GM18951 (cell line): ENCODE measurements at regions of chr3 and their contacts with region 1.

Region 1: DNA sequence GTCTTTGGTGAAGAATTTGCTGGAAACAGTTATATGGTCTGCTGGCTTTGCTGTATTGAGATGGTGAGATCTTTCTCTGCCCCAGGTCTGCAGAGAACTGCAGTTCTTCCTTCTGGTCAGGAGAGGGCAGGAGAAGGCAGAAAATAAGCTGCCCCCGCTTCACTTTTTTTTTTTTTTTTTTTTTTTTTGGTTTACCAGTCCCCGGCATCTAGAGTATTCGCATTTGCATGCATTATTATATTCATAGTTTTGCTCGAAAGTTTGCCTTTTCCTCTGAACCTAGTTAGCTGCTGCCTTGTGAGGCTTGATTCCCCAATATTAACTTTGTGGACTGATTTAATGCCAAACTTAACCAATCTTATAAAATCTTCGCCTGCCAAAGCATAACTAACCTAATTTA is 10.6 kb upstream of the PARL start:
- POLR2A ChIP-seq: no peak

Region 2: GRCh38 chr3:184017672-184018423 is 122.6 kb after region 1 on chr3 and contains the start of gene ABCC5:
- in situ Hi-C with region 1: loop called (anchors 10 kb)
- POLR2A ChIP-seq: peak; percentile 66

Region 3: DNA sequence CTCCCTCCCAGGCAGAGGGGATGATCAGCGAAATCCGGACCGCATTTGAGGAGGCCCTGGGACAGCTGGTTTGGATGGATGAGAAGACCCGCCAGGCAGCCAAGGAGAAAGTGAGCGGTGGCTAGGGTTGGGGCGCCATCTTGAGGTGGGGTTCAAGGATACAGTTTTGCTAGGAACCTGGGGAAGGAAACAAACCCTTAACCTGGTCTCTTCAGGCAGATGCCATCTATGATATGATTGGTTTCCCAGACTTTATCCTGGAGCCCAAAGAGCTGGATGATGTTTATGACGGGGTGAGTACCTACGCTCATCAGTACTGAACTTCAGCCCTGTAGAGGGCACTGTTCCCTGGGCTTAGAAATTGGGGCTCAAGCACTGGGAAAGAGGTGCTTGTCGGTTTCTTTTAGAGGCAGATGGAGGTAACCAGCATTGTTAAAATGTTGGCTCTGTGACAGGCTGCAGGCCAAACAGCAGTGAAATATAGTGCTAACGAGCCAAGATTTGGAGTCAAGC is 394.2 kb after region 1 on chr3:
- in situ Hi-C with region 1: loop called (anchors 10 kb)
- POLR2A ChIP-seq: no peak